GM12878 (cell line): ENCODE measurements at regions of chr14 and their contacts with region 1.

Region 1: DNA sequence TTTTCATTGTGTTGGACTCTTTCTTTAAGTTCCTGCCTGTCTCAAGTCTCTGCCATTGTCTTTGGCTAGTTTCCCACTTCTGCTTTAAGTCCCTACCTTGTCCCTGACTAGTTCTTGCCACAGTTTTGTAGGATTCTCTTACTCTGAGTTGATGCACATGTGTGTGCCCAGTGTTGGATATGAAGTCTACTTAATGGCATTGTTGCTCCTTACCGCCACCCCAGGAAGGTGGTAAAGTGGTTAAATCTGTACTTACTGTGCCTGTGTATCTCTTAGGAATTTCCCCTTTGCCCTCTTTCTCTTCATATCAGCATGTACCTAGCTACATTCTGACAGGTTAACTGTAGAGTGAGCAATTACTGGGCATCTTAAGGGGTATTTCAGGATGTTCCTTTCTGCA is 227.1 kb downstream of the NUBPL start:
- DNase-seq: no peak
- ATAC-seq: no peak
- H3K4me3 ChIP-seq: no peak overlapping the region
- H3K27ac ChIP-seq: no peak overlapping the region
- H3K4me1 ChIP-seq: no peaks in the 10 kb centered on the region
- H3K27me3 ChIP-seq: no peaks in the 10 kb centered on the region
- CTCF ChIP-seq: no peak
- EP300 ChIP-seq: no peak
- POLR2A ChIP-seq: no peak
- RAD21 ChIP-seq: no peak

Region 2: DNA sequence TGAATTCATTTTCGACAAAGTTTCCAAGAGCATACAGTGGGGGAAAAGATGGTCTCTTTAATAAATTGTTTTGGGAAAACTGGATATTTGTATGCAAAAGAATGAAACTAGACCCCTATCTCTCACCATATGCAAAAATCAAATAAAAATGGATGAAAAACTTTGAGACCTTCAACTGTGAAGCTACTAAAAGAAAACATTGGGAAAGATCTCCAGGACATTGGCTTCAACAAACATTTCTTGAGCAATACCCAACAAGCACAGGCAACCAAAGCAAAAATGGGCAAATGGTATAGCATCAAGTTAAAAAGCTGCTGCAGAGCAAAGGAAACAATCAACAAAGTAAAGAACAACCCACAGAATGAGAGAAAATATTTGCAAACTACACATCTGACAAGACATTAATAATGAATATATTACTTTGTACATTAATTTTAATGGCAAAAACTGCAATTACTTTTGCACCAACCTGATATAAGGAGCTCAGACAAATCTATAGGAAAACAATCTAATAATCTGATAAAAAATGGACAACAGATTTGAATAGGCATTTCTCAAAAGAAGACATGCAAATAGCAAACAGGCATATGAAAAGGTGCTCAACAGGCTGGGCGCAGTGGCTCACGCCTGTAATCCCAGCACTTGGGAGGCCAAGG is 176.4 kb before region 1 on chr14:
- CTCF ChIA-PET with region 1: no interaction called
- POLR2A ChIA-PET with region 1: no interaction called
- RAD21 ChIA-PET with region 1: no interaction called
- SMC1A ChIA-PET with region 1: no interaction called
- in situ Hi-C with region 1: no loop called
- intact Hi-C with region 1: loop called (anchors 5 kb)
- DNase-seq: no peak
- ATAC-seq: no peak
- H3K4me3 ChIP-seq: no peak overlapping the region
- H3K27ac ChIP-seq: no peak overlapping the region
- H3K4me1 ChIP-seq: no peaks in the 10 kb centered on the region
- H3K27me3 ChIP-seq: no peaks in the 10 kb centered on the region
- CTCF ChIP-seq: no peak
- EP300 ChIP-seq: no peak
- POLR2A ChIP-seq: no peak
- RAD21 ChIP-seq: no peak